Astrocyte of the cerebellum (primary cell): ENCODE measurements at regions of chr15 and their contacts with region 1.

Region 1: GRCh38 chr15:64515196-64515595 is 54.8 kb downstream of the ZNF609 start:
- DNase-seq: no peak
- H3K4me3 ChIP-seq: no peak overlapping the region
- CTCF ChIP-seq: no peak

Region 2: DNA sequence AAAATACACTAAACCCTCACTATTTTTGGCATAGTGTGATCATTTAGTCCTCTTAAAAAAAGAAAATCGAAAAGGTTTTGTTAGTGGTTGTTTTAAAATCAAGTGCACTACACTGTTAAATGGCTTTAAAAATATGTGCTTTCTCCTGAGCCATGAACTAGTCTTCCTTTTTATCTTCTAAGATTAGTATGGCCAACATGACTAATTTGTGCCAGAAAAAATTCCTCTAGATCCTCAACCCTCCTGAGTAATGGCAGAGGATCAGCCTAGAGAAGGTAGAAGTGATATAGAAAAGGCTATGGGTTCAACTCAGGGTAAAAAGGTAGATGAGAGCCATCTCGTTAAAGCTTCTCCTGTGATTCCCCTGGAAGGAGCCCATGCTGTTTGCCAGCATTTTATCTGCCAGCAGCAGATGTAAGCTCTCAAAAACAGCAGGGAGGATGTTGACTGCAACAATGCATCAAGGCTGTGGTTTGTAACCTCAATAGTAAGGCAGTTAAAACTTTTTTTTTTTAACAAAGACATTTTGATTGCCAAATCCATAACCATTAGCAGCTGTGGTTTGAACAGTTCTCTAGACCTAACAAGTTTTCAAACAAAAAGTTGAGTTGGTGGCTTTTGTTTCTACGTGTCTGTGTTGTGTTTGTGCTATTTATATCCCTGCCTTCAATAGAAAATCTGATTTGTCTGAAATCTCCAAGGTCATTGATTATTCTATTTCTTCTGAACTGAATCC is 85.0 kb before region 1 on chr15:
- in situ Hi-C with region 1: loop called (anchors 5 kb)
- DNase-seq: peak; percentile 98
- H3K4me3 ChIP-seq: no peak overlapping the region
- CTCF ChIP-seq: no peak

Region 3: DNA sequence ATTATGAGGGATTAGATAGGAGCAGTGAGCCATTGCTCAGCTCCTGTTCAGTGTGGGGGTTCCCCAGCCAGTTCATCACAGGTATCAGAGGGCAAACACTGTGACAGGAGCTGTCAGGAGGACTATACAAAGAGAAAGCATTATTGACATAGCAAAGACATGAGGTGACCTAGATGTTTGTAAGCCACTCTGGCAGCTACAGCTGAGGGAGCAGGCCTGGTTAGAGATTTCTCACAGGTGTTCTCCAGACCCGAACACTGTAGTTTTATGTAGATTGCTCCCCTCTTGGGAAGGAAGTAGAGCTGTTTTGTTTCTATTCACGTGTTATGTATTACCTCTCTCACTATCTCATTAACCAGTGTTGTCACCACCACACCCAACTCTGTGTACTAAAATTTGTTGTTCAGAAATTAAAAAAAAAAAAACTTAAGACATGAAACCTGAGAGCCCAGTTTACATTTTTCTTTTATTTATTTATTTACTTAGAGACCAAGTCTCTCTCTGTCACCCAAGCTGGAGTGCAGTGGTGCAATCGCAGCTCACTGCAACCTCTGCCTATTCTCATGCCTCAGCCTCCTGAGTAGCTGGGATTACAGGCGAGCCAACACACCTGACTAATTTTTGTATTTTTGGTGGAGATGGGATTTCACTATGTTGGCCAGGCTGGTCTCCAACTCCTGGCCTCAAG is 136.5 kb after region 1 on chr15:
- in situ Hi-C with region 1: no loop called
- DNase-seq: no peak
- H3K4me3 ChIP-seq: no peak overlapping the region
- CTCF ChIP-seq: no peak